Dorsolateral prefrontal cortex (tissue), 120 donors: ENCODE measurements at regions of chr12 and their contacts with region 1.

Region 1: GRCh38 chr12:105934274-105934673 is 204.5 kb downstream of the NUAK1 start:
- DNase-seq: peak in 8 of 10 donors; percentile 28 to 65 (median 47)
- H3K4me3 ChIP-seq: peak overlapping the region in 6 of 59 donors; percentile 6 to 49 (median 8)
- H3K27ac ChIP-seq: peak overlapping the region in 48 of 59 donors; percentile 5 to 79 (median 58)
- H3K27me3 ChIP-seq: no peaks in the 10 kb centered on the region
- CTCF ChIP-seq: no peak

Region 2: GRCh38 chr12:104263580-104264358 is 1670.5 kb before region 1 on chr12:
- intact Hi-C with region 1: no loop called
- DNase-seq: no peak
- H3K4me3 ChIP-seq: no peak overlapping the region
- H3K27ac ChIP-seq: no peak overlapping the region
- H3K27me3 ChIP-seq: no peaks in the 10 kb centered on the region
- CTCF ChIP-seq: no peak

Region 3: DNA sequence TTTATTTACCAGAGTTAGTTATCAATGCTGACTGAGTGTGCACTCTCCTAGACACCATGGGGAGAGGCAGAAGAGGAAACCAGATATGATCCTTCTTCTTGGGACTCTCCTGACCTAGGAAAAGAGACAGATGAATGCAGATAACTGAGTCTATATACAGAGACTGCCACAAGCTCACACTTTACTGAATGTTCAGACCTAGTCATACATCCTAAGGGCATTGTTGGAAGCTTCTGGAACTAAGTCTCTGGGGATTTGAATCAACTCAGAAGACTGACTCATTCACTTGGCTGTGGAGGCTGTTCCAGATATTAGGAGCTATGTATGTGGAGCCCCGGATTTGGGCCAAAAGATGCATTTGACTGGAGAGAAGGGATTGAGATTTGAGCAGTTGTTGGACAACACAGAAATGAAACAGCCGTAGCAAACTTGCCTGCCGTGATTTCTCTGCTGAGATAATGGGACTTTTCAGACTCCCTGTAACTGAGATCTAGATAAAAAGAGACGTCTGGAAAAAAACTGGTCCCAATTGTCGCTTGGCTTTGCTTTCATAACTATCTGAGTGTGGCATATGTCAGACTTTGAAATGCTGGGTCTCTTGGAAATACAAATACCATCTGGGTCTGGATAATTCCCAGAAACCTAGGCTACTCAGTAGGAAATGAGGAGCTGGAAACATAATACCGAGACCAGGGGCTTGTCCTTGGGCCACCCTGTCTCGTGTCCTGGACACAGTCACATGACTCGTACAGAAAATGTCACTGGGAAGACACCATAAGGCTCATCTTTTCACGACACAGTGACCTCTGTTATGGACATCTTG is 192.3 kb before region 1 on chr12:
- intact Hi-C with region 1: loop called in 1 of 2 experiments (anchors 10 kb)
- DNase-seq: peak in 4 of 10 donors; percentile 14 to 47 (median 34)
- H3K4me3 ChIP-seq: peak overlapping the region in 2 of 59 donors; percentile 11 to 16
- H3K27ac ChIP-seq: peak overlapping the region in 54 of 59 donors; percentile 0 to 90 (median 70)
- H3K27me3 ChIP-seq: no peaks in the 10 kb centered on the region
- CTCF ChIP-seq: no peak

Region 4: DNA sequence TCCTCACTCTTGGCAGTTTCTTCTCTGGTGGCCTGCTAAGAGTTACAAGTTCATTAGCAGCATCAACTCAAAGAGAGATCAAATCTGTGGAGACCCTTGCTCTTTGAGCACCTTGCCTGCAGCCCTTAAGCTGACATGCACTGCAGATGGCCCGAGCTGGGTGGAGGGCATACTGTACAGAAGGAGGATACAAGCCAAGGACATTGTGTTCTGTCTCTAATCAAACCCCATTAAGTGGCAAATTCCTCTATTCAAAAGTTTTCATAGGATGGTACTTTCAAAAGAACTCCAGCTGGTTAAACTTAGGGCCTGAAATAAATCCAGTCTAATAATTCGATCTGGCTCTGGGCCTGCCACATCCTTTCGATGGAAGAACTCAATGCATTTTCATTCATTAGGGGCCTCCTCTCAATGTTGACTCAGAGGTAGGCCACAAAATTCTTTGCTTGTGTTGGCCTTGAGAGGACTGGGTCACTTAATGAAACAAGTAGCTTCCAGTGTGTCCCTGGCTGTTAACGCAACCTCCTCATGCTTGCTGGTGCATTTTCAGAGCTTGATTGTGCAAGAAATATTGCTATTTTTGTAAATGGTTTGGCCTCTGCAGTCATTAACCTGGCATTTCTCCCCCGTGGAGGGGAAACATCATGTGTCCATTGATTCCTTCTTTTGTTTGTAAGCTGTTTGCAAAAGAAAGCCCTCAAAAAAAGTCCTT is 113.7 kb before region 1 on chr12:
- intact Hi-C with region 1: loop called in 1 of 2 experiments (anchors 10 kb)
- DNase-seq: peak in 1 of 10 donors; percentile 28
- H3K4me3 ChIP-seq: no peak overlapping the region
- H3K27ac ChIP-seq: peak overlapping the region in 39 of 59 donors; percentile 2 to 83 (median 50)
- H3K27me3 ChIP-seq: no peaks in the 10 kb centered on the region
- CTCF ChIP-seq: no peak

Region 5: GRCh38 chr12:106044773-106045172 is 110.5 kb after region 1 on chr12:
- intact Hi-C with region 1: loop called in 1 of 2 experiments (anchors 10 kb)
- DNase-seq: no peak
- H3K4me3 ChIP-seq: no peak overlapping the region
- H3K27ac ChIP-seq: peak overlapping the region in 28 of 59 donors; percentile 8 to 97 (median 38)
- H3K27me3 ChIP-seq: no peaks in the 10 kb centered on the region
- CTCF ChIP-seq: no peak